K562 (cell line): ENCODE measurements at regions of chr7 and their contacts with region 1.

Region 1: DNA sequence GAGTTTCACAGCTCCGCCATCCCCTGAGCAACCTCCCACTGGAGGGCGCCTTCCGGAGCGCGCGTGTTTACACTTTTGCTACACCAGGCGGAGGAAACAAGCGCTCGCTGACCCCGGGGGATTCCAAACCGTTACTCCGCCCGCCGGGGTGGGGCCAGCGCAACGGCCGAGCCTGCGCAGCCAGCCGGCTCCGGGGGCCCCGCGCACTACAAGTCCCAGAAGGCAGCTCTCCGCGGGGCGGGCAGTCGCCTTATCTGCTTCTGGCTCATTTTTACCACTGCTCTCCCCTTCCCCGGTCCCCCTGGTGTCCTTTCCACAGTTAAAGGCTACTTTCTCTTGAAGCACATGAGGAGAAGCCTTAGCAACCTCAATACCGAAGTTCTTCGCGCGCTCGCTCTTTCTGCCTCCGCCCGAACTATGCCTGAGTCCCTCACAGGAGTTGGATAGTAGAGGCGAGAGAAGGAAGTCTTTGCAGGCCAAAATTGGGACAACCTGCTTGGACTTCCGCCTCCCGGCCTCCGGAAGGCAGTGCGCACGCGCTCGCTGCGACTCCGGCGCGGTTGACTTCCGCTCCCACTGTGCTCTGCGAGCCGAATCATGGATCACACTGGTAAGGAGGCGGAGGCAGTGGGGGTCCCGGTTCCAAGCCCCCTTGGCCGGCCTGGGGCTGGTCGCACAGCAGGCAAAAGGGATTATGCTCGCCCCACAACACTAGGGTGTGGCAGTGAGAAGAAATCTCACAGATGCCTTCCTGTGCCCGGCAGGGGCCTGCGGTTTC is at the start of gene CBLL1:
- DNase-seq: peak; percentile 95 to 99 (median 96)
- ATAC-seq: peak; percentile 97
- H3K4me3 ChIP-seq: peak within 1 kb of the TSS; percentile 93
- H3K27ac ChIP-seq: peak within 1 kb of the TSS; percentile 100
- H3K4me1 ChIP-seq: peaks cover 3 to 21% of the 10 kb centered on the region in 2 experiments
- H3K27me3 ChIP-seq: no peaks in the 10 kb centered on the region
- CTCF ChIP-seq: peak; percentile 96 to 98 (median 97)
- EP300 ChIP-seq: peak; percentile 78; the same call in 1 of the 2 replicates
- POLR2A ChIP-seq: peak; percentile 99
- RAD21 ChIP-seq: peak; percentile 81 to 96
- polyA plus RNA-seq, gene CBLL1: 17.4 to 35.4 TPM

Region 2: GRCh38 chr7:107754642-107755041 is 10.9 kb after region 1 on chr7:
- CTCF ChIA-PET with region 1: no interaction called
- POLR2A ChIA-PET with region 1: interaction called, 14 read pairs
- in situ Hi-C with region 1: no loop called
- intact Hi-C with region 1: no loop called
- DNase-seq: no peak
- ATAC-seq: no peak
- H3K4me3 ChIP-seq: no peak overlapping the region
- H3K27ac ChIP-seq: no peak overlapping the region
- H3K4me1 ChIP-seq: no peaks in the 10 kb centered on the region
- H3K27me3 ChIP-seq: no peaks in the 10 kb centered on the region
- CTCF ChIP-seq: peak in 1 of 3 experiments; percentile 30; a peak in 3 of 6 replicates
- EP300 ChIP-seq: no peak
- POLR2A ChIP-seq: no peak
- RAD21 ChIP-seq: no peak